ENCODE measurements at regions of chr1 and their contacts with region 1.

Region 1: DNA sequence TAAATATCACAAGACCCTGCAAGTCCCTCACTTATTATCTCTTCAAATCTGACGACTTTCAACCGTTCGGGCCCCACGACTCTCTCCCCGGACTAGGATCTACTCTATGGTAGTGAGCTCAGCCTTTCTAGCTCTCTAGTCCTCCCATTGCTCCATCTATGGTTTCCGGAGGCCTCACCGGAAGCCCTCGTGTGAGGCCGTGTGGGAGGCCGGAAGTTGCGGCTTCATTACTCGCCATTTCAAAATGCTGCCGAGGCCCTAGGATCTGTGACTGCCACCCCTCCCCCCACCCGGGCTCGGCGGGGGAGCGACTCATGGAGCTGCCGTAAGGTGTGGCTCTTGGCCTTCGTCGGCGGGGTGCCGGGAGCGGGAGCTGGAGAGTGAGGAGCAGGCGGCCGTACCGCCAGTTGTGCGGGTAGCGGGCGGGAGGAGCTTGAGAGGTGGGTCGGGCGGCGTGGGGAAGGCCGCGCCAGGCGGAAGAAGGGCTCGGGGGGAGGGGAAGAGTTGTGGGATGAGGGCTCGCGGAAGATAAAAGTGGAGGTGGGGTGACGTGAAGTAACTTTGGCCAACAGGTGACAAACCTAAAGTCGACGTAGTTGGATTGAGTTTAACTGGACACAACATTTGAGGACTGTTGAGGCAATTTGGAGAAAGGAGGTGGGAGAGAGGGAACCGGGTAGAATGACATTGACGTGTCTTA is at the start of gene MDM4:
- DNase-seq: peak; percentile 90
- H3K4me3 Mint-ChIP-seq: no peak within 1 kb of the TSS
- H3K27ac Mint-ChIP-seq: no peak within 1 kb of the TSS
- H3K4me1 Mint-ChIP-seq: peaks cover 45% of the 10 kb centered on the region
- H3K27me3 Mint-ChIP-seq: no peaks in the 10 kb centered on the region
- total RNA-seq, gene MDM4: 75.5 and 80.3 TPM in 2 replicates

Region 2: GRCh38 chr1:203861379-203862184 is 654.7 kb before region 1 on chr1 and contains the start of gene SNRPE:
- intact Hi-C with region 1: loop called (anchors 1 kb)
- DNase-seq: peak; percentile 96
- H3K4me3 Mint-ChIP-seq: peak within 1 kb of the TSS; percentile 100
- H3K27ac Mint-ChIP-seq: peak within 1 kb of the TSS; percentile 98
- H3K4me1 Mint-ChIP-seq: peaks cover 25% of the 10 kb centered on the region
- H3K27me3 Mint-ChIP-seq: no peaks in the 10 kb centered on the region
- total RNA-seq, gene SNRPE: 250 and 270 TPM in 2 replicates

Region 3: GRCh38 chr1:204494281-204495077 is 21.9 kb before region 1 on chr1 and contains the start of gene PIK3C2B:
- intact Hi-C with region 1: loop called (anchors 1 kb)
- DNase-seq: peak; percentile 64
- H3K4me3 Mint-ChIP-seq: peak within 1 kb of the TSS; percentile 95
- H3K27ac Mint-ChIP-seq: peak within 1 kb of the TSS; percentile 96
- H3K4me1 Mint-ChIP-seq: peaks cover 61% of the 10 kb centered on the region
- H3K27me3 Mint-ChIP-seq: no peaks in the 10 kb centered on the region
- total RNA-seq, gene PIK3C2B: 21.8 and 24.1 TPM in 2 replicates

Region 4: GRCh38 chr1:204565617-204566582 is 49.6 kb after region 1 on chr1:
- intact Hi-C with region 1: loop called (anchors 2 kb)
- DNase-seq: peak; percentile 56
- H3K4me3 Mint-ChIP-seq: no peak overlapping the region
- H3K27ac Mint-ChIP-seq: peak overlapping the region; percentile 68
- H3K4me1 Mint-ChIP-seq: peaks cover 67% of the 10 kb centered on the region
- H3K27me3 Mint-ChIP-seq: no peaks in the 10 kb centered on the region

Region 5: DNA sequence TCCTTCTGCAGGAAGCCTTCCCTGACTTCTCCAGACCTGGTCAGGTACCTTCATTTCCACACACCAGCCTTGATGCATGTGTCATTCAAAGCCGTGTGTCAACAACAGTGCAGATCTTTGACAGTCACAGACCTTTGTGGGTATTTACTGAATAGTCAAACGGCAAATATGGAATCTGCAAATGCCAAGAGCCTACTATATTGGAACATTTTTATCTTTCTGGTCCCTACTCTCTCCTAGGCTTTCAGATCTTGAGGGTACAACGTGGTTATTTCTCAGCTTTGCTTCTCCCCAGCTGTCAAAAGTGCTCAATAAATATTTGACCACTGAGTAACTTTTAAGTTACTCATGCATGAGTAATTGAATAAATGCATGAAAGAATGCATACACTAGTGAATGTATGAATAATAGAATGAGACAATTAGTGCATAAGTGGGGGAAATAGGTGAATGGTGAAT is 75.3 kb after region 1 on chr1:
- intact Hi-C with region 1: no loop called
- DNase-seq: no peak
- H3K4me3 Mint-ChIP-seq: no peak overlapping the region
- H3K27ac Mint-ChIP-seq: no peak overlapping the region
- H3K4me1 Mint-ChIP-seq: no peaks in the 10 kb centered on the region
- H3K27me3 Mint-ChIP-seq: peaks cover 2% of the 10 kb centered on the region

Region 6: GRCh38 chr1:205121660-205122488 is 605.5 kb after region 1 on chr1 and contains the start of gene RBBP5:
- intact Hi-C with region 1: loop called (anchors 10 kb)
- DNase-seq: peak; percentile 92
- H3K4me3 Mint-ChIP-seq: peak within 1 kb of the TSS; percentile 98
- H3K27ac Mint-ChIP-seq: peak within 1 kb of the TSS; percentile 98
- H3K4me1 Mint-ChIP-seq: peaks cover 39% of the 10 kb centered on the region
- H3K27me3 Mint-ChIP-seq: no peaks in the 10 kb centered on the region
- total RNA-seq, gene RBBP5: 21.5 and 24.7 TPM in 2 replicates

Region 7: GRCh38 chr1:205284343-205285144 is 768.2 kb after region 1 on chr1:
- intact Hi-C with region 1: loop called (anchors 10 kb)
- DNase-seq: peak; percentile 84
- H3K4me3 Mint-ChIP-seq: peak overlapping the region; percentile 64
- H3K27ac Mint-ChIP-seq: peak overlapping the region; percentile 90
- H3K4me1 Mint-ChIP-seq: peaks cover 75% of the 10 kb centered on the region
- H3K27me3 Mint-ChIP-seq: peaks cover 9% of the 10 kb centered on the region

Measured in activated T-helper 1 cell treated with anti-CD3 and anti-CD28 coated beads, Interleukin-12 subunit alpha, Interleukin-12 subunit beta, Interleukin-2, Interleukin-4 antibody, amounts not matched to agents 30 ng/mL and 10 ng/mL and 1 ng/mL, durations not matched to agents 14 hours and 24 hours and 36 hours (primary cell).